CD4-positive, alpha-beta memory T cell (primary cell): ENCODE measurements at regions of chr4 and their contacts with region 1.

Region 1: GRCh38 chr4:87926554-87927098 is 48.9 kb upstream of the SPP1 start:
- DNase-seq: no peak
- H3K4me3 ChIP-seq: no peak overlapping the region
- H3K4me3 Mint-ChIP-seq: no peak overlapping the region
- H3K27ac ChIP-seq: no peak overlapping the region
- H3K27ac Mint-ChIP-seq: no peak overlapping the region
- H3K4me1 ChIP-seq: no peaks in the 10 kb centered on the region
- H3K4me1 Mint-ChIP-seq: no peaks in the 10 kb centered on the region
- H3K27me3 ChIP-seq: no peaks in the 10 kb centered on the region
- H3K27me3 Mint-ChIP-seq: peaks cover 5 to 8% of the 10 kb centered on the region in 2 donors

Region 2: DNA sequence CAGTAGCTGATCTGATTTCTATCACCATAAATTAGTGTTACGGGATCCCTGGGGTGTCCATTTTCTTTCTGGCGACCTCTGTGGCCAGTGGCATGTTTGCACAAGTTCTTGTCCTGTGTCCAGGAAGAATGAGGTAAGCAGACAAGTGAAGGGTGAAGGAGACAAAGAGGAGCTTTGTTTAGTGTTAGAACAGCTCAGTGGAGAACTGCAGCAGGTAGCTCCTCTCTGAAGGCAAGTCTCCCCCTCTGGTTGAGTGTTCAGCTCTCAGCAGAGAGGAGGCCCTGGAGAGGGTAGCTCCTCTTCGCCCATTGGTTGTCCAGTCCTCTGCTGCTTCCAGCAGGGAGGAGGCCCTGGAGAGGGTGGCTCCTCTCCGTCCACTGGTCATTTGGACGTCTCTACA is 229.4 kb before region 1 on chr4:
- CTCF ChIA-PET with region 1: no interaction called
- POLR2A ChIA-PET with region 1: no interaction called
- intact Hi-C with region 1: no loop called
- DNase-seq: no peak
- H3K4me3 ChIP-seq: no peak overlapping the region
- H3K4me3 Mint-ChIP-seq: no peak overlapping the region
- H3K27ac ChIP-seq: no peak overlapping the region
- H3K27ac Mint-ChIP-seq: no peak overlapping the region
- H3K4me1 ChIP-seq: no peaks in the 10 kb centered on the region
- H3K4me1 Mint-ChIP-seq: no peaks in the 10 kb centered on the region
- H3K27me3 ChIP-seq: no peaks in the 10 kb centered on the region
- H3K27me3 Mint-ChIP-seq: peaks cover 0 to 5% of the 10 kb centered on the region in 2 donors

Region 3: DNA sequence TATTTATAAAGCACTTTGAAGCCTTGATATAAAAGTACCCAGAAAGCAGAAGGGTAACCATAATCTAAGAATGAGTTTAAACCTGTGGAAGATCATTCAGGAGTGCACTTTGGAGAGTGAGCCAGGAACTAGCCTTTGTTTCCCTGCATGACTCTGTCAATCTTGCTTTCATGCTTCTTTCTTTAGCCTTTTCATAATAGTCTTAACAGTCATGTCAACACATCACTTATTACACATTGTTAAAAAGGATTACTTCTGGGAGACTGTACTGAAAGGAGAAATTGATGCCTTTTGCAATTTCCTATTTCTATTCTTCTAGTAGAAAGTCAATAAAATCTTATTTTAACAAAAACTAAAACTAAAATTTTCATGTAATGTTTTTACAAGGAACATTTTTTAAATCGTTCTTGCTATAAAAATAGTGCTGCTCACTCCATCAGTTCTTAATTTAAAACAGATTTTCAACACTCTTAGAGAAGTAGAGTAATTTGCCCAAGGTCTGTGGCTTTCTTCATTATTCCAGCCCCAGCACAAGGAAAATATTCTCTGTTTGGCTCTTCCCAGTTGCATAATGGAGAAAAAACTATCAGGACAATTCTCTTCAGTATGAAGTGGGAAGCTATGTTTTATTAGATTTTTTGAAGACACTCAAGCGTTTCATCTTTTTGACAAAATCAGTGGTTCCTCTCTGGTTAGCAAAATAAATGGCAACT is 13.5 kb after region 1 on chr4:
- CTCF ChIA-PET with region 1: no interaction called
- POLR2A ChIA-PET with region 1: no interaction called
- intact Hi-C with region 1: loop called (anchors 2 kb)
- DNase-seq: no peak
- H3K4me3 ChIP-seq: no peak overlapping the region
- H3K4me3 Mint-ChIP-seq: no peak overlapping the region
- H3K27ac ChIP-seq: no peak overlapping the region
- H3K27ac Mint-ChIP-seq: no peak overlapping the region
- H3K4me1 ChIP-seq: no peaks in the 10 kb centered on the region
- H3K4me1 Mint-ChIP-seq: no peaks in the 10 kb centered on the region
- H3K27me3 ChIP-seq: no peaks in the 10 kb centered on the region
- H3K27me3 Mint-ChIP-seq: peaks cover 5 to 14% of the 10 kb centered on the region in 2 donors

Region 4: GRCh38 chr4:88115587-88115986 is 189.0 kb after region 1 on chr4:
- CTCF ChIA-PET with region 1: no interaction called
- POLR2A ChIA-PET with region 1: no interaction called
- intact Hi-C with region 1: no loop called
- DNase-seq: no peak
- H3K4me3 ChIP-seq: no peak overlapping the region
- H3K4me3 Mint-ChIP-seq: no peak overlapping the region
- H3K27ac ChIP-seq: no peak overlapping the region
- H3K27ac Mint-ChIP-seq: no peak overlapping the region
- H3K4me1 ChIP-seq: no peaks in the 10 kb centered on the region
- H3K4me1 Mint-ChIP-seq: no peaks in the 10 kb centered on the region
- H3K27me3 ChIP-seq: no peaks in the 10 kb centered on the region
- H3K27me3 Mint-ChIP-seq: peaks cover 0 to under 1% of the 10 kb centered on the region in 2 donors